ENCODE measurements at regions of chr1 and their contacts with region 1.

Region 1: GRCh38 chr1:172338295-172338735 is 82.2 kb upstream of the C1orf105 start:
- DNase-seq: peak; percentile 72
- H3K4me3 Mint-ChIP-seq: peak overlapping the region; percentile 16
- H3K27ac Mint-ChIP-seq: peak overlapping the region; percentile 51
- H3K4me1 Mint-ChIP-seq: peaks cover 36% of the 10 kb centered on the region
- H3K27me3 Mint-ChIP-seq: no peaks in the 10 kb centered on the region

Region 2: DNA sequence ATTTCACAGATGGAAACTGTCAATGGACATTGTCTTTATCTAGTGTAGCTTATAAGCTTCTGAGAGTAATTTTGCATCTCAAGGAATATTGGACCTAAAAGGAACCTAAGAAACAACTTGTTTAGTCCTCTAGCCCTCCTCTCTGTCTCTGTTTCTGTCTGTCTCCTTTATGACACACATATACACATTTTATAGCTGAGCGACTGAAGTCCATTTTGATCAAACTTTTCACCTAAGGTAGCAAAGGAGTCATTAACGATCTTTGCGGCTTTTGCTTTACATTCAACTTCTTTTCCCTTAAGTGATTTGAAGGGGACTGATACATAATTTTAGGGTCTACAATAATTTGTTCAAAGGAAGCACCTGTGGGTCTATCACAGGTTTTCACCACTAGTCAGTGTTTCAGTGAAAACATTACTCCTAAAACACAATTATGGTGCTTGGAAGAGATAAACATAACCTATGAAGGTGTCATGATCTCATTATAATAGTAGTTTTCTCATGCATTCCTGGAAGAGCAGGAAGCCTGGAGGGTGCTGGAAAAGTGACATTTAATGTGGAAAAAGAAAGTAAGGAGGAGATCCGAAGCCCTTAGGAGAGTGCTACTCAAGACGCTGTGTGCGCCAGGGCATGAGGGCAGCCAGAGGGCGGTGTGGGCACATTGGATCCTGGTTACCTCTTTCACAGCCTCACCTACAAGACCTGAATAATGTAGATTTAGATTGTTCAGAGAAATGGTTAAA is 248.4 kb before region 1 on chr1:
- intact Hi-C with region 1: loop called (anchors 10 kb)
- DNase-seq: peak; percentile 86
- H3K4me3 Mint-ChIP-seq: no peak overlapping the region
- H3K27ac Mint-ChIP-seq: no peak overlapping the region
- H3K4me1 Mint-ChIP-seq: peaks cover 7% of the 10 kb centered on the region
- H3K27me3 Mint-ChIP-seq: no peaks in the 10 kb centered on the region

Region 3: GRCh38 chr1:172154551-172154950 is 183.8 kb before region 1 on chr1:
- intact Hi-C with region 1: loop called (anchors 1 kb)
- DNase-seq: no peak
- H3K4me3 Mint-ChIP-seq: peak overlapping the region; percentile 66
- H3K27ac Mint-ChIP-seq: peak overlapping the region; percentile 95
- H3K4me1 Mint-ChIP-seq: peaks cover 9% of the 10 kb centered on the region
- H3K27me3 Mint-ChIP-seq: no peaks in the 10 kb centered on the region

Region 4: DNA sequence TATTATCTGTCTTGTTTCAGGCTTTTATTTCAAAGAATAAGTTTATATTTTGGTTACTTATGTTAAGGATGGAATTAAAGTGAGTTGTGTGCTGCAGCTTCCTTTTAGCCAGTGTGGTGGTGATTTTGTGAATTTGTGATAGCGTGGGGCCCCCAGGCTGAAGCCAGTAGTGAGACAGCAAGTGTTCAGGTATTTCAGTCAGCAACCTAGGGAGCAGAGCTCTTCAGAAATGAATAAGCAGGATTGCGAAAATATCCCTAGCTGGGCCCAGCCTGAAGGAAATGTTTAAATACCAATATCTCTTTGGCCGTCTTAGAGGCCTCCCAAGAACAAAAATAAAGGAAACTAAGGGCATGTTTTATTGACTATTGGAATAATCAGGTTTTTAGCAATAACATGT is 68.7 kb before region 1 on chr1:
- intact Hi-C with region 1: loop called (anchors 1 kb)
- DNase-seq: no peak
- H3K4me3 Mint-ChIP-seq: peak overlapping the region; percentile 29
- H3K27ac Mint-ChIP-seq: peak overlapping the region; percentile 88
- H3K4me1 Mint-ChIP-seq: peaks cover 44% of the 10 kb centered on the region
- H3K27me3 Mint-ChIP-seq: no peaks in the 10 kb centered on the region

Region 5: DNA sequence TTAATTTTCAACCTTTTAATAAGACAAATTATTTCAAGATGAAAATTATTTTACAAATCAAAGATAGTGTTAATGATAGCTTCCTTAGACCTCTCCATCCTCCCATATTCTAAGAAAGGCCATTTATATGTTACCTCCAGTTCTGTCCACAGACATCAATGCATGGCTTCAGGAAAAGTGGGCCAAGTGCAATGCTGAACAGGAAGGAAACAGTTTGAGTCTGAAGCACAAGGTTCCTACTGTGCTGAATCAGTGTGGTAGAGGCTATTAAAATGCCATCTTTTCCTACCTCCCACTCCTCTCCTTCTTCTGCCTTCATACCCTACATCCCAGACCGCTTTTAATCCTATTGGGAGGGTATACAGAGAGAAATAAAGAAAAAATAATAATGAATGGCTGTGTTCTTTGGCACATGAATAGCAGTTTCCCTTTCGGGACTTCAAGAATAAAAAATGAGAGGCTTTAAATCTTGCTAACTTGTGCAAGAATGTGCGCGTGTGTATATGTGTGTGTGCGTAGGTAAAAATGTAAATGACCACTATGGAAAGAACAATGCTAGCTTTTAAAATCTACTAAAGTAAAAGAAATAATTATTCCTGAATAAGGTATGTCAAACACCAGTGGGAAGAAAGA is 19.6 kb after region 1 on chr1:
- intact Hi-C with region 1: loop called (anchors 1 kb)
- DNase-seq: no peak
- H3K4me3 Mint-ChIP-seq: peak overlapping the region; percentile 7
- H3K27ac Mint-ChIP-seq: peak overlapping the region; percentile 84
- H3K4me1 Mint-ChIP-seq: peaks cover 45% of the 10 kb centered on the region
- H3K27me3 Mint-ChIP-seq: no peaks in the 10 kb centered on the region

Region 6: GRCh38 chr1:172380441-172381244 is 42.3 kb after region 1 on chr1:
- intact Hi-C with region 1: loop called (anchors 2 kb)
- DNase-seq: peak; percentile 80
- H3K4me3 Mint-ChIP-seq: peak overlapping the region; percentile 57
- H3K27ac Mint-ChIP-seq: peak overlapping the region; percentile 86
- H3K4me1 Mint-ChIP-seq: peaks cover 18% of the 10 kb centered on the region
- H3K27me3 Mint-ChIP-seq: no peaks in the 10 kb centered on the region

Region 7: GRCh38 chr1:172638885-172639831 is 300.8 kb after region 1 on chr1:
- intact Hi-C with region 1: no loop called
- DNase-seq: peak; percentile 92
- H3K4me3 Mint-ChIP-seq: peak overlapping the region; percentile 77
- H3K27ac Mint-ChIP-seq: peak overlapping the region; percentile 100
- H3K4me1 Mint-ChIP-seq: peaks cover 74% of the 10 kb centered on the region
- H3K27me3 Mint-ChIP-seq: peaks cover 3% of the 10 kb centered on the region

Measured in activated CD4-positive, alpha-beta T cell treated with anti-CD3 and anti-CD28 coated beads, Interleukin-2, amount 10 ng/mL, durations not matched to agents 24 days and 14 days (primary cell).